ENCODE measurements at regions of chr22 and their contacts with region 1.

Region 1: DNA sequence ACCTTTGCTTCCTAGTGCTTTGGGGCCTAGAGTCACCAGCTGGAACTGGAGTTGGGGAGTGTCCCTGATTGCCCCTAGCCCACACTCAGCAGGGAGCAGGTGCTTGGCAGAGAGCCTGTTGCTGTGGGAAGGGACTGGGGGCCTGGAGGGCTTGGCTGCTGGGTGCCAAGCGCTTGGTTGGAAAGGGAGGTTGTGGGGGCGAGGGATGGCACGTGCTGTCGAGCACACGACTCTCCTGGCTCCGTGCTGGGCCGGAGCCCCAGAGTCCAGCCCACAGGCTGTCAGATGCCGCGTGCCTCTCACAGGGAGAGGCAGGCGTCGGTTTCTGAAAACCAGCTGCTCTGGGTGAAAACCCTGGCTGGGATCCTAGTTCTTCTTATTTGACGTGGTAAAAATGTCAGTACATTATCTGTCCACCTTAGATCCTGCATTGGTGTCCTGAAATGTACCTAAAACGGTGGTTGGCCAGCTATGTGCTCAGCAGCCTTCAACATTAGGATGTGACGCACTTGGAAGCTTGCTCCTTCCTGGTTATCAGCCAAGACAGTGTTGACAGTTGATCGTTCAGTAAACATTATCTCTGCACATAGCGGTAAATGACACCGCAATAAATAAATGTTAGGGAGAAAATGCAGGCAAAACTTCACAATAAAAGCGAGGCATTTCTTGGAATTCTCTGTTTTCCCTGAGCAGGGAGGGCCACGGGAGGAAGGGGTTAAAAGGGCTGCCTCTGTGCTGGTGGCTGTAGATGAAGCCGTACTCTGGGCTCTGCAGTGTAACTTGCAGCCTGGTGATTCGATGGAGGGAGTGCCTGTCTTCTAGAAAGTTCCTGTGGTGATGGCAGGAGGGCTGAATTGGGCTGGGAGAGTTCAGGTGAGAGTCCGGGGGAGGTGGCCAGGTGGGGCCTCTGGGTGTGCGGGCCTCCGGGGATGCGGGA is 29.2 kb downstream of the GRAMD4 start:
- DNase-seq: peak in 1 of 10 donors; percentile 25

Region 2: DNA sequence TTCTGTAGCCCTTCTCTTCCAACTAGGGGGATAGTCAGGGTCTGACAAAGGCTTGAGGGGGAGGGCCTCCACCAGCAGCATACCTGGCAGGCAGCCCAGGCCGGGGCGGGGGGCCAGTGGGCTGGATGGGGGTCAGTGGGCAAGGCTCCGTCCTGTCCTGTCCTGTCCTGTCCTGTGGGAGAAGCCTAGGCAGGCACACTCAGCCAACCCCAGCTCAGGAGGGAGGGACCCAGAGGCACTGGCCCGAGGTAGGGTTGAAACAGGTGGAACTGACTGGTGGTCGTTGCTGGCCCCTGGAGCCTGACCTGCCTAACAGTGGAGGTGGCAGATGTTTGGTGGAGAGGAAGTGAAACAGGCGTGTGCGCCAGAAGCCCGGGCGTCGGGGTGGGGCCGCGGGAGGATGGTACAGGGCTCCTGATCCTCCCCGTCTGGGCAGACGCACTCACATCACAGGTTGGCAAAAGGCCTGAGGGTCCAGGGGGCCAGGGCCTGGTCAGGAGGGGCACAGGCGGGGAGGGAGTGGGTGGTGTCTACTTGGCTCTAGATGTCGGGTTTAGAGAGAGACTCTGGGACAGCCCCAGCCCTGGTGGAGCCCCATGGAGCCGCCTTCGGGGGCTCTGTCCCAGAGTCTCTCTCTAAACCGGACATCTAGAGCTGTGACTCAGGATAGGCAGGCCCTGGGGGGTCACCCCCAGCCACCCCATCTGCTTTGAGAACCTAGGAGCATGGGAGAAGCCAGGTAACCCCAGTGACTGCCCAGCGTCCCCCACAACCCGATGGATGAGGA is 61.7 kb before region 1 on chr22:
- intact Hi-C with region 1: loop called (anchors 10 kb)
- DNase-seq: peak in 3 of 10 donors; percentile 37 to 87 (median 63)